ENCODE measurements at regions of chr1 and their contacts with region 1.

Region 1: DNA sequence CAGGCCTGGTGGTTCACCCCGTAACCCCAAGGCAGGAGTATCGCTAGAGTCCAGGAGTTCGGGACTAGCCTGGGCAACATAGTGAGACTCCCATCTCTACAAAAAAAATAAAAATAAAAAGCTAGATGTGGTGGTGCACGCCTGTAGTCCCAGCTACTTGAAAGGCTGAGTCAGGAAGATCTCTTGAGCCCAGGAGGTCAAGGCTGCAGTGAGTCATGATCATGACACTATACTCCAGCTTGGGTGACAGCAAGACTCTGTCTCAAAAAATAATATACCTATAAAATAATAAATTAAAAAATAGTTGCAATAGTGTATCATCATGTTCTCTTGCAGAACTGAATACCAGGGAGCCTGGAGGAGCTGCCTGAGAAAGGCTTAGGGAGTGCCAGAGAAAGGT is 19.9 kb upstream of the TMEM39B start:
- DNase-seq: no peak
- H3K4me3 ChIP-seq: no peak overlapping the region
- CTCF ChIP-seq: no peak

Region 2: DNA sequence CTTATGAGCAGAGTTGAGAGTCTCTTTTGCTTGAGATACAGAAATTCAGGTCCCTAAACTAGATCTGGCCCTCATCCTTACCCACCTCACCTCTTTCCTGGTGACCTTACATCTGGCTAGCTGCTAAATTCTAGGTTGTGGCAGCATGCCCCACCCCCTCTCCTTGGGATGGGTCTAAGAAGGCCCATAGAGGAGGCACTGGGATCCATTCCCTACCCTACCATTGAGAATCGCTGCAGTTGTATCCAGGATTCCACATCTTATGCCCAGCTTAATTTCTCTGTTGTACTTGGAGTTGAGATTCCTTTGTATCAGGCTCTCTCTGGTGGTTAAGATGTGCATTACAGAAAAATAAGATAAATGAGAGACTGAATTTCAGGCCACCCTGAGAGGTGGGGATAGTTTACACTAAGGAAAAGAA is 10.4 kb after region 1 on chr1:
- CTCF ChIA-PET with region 1: interaction called, 13 read pairs
- POLR2A ChIA-PET with region 1: interaction called, 3 read pairs
- DNase-seq: no peak
- H3K4me3 ChIP-seq: no peak overlapping the region
- CTCF ChIP-seq: peak; percentile 50